CD8-positive, alpha-beta T cell (primary cell): ENCODE measurements at regions of chr14 and their contacts with region 1.

Region 1: DNA sequence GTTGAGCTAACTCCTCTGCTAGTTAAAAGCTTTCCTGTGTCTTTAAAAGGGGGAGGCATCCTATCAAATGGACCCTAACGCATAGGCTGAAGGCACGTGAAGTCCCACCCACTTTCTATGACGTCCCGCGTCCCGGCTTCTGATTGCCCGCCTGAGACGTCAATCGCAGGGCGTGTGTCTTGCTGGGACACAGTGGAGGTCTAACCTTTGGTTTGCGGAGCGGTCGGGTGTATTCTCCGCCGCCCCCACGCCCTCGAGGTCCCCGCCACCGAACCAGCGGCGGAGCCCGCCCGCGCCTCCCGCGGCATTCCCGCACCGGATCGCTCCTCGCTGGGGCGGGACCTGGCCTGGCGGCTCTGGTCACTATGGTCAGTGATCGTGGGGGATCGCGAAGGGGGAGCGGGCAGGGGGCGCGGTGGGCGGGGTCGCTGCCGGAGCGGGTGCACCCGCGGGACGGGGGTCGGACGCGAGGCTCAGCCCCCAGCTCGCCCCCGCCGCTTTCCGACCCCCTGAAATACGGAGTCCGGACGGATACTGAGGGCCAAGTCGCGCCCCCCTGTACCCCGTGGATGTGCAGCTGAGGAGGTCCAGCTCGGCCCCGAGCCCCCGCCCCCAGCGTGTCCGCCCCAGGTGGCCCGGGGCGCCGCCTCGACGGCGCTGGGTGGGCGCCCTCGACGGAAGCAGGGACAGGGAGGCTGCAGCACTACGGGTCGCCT is at the start of gene OTUB2:
- DNase-seq: peak; percentile 91 to 98 (median 95)
- ATAC-seq: peak; percentile 100
- H3K4me3 ChIP-seq: peak within 1 kb of the TSS; percentile 24 to 42
- H3K4me3 Mint-ChIP-seq: peak within 1 kb of the TSS; percentile 84
- H3K27ac ChIP-seq: no peak within 1 kb of the TSS
- H3K27ac Mint-ChIP-seq: no peak within 1 kb of the TSS
- H3K4me1 ChIP-seq: no peaks in the 10 kb centered on the region
- H3K4me1 Mint-ChIP-seq: peaks cover 25% of the 10 kb centered on the region
- H3K27me3 ChIP-seq: no peaks in the 10 kb centered on the region
- H3K27me3 Mint-ChIP-seq: peaks cover 3% of the 10 kb centered on the region
- CTCF ChIP-seq: no peak
- total RNA-seq, gene OTUB2: not detected

Region 2: GRCh38 chr14:93857081-93857480 is 169.2 kb before region 1 on chr14:
- CTCF ChIA-PET with region 1: no interaction called
- POLR2A ChIA-PET with region 1: no interaction called
- intact Hi-C with region 1: no loop called
- DNase-seq: no peak
- ATAC-seq: no peak
- H3K4me3 ChIP-seq: no peak overlapping the region
- H3K4me3 Mint-ChIP-seq: no peak overlapping the region
- H3K27ac ChIP-seq: no peak overlapping the region
- H3K27ac Mint-ChIP-seq: no peak overlapping the region
- H3K4me1 ChIP-seq: no peaks in the 10 kb centered on the region
- H3K4me1 Mint-ChIP-seq: no peaks in the 10 kb centered on the region
- H3K27me3 ChIP-seq: no peaks in the 10 kb centered on the region
- H3K27me3 Mint-ChIP-seq: peaks cover 22% of the 10 kb centered on the region
- CTCF ChIP-seq: no peak

Region 3: GRCh38 chr14:94036313-94037050 is 10.2 kb after region 1 on chr14:
- CTCF ChIA-PET with region 1: interaction called, 109 read pairs
- POLR2A ChIA-PET with region 1: interaction called, 7 read pairs
- intact Hi-C with region 1: no loop called
- DNase-seq: peak; percentile 52 to 84 (median 78)
- ATAC-seq: peak; percentile 99
- H3K4me3 ChIP-seq: no peak overlapping the region
- H3K4me3 Mint-ChIP-seq: no peak overlapping the region
- H3K27ac ChIP-seq: no peak overlapping the region
- H3K27ac Mint-ChIP-seq: no peak overlapping the region
- H3K4me1 ChIP-seq: no peaks in the 10 kb centered on the region
- H3K4me1 Mint-ChIP-seq: peaks cover 3% of the 10 kb centered on the region
- H3K27me3 ChIP-seq: no peaks in the 10 kb centered on the region
- H3K27me3 Mint-ChIP-seq: no peaks in the 10 kb centered on the region
- CTCF ChIP-seq: peak; percentile 82

Region 4: DNA sequence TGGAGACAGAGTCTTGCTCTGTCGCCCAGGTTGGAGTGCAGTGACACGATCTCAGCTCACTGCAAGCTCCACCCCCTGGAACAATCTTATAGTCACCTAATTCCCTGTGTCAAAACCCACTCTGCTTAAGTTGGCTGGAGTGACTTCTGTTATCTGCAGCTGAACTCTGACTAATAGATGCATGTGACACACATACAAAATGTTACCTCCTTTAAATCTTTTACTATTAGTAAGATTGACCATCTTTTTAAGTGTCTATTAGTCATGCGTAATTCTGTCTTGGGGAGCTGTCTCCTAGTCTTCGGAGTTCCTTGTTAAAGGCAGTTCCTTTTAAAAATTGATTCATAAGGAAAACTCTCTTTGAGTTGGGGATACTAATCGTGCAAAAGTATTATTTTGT is 62.2 kb after region 1 on chr14:
- CTCF ChIA-PET with region 1: no interaction called
- POLR2A ChIA-PET with region 1: no interaction called
- intact Hi-C with region 1: no loop called
- DNase-seq: no peak
- ATAC-seq: no peak
- H3K4me3 ChIP-seq: no peak overlapping the region
- H3K4me3 Mint-ChIP-seq: no peak overlapping the region
- H3K27ac ChIP-seq: no peak overlapping the region
- H3K27ac Mint-ChIP-seq: no peak overlapping the region
- H3K4me1 ChIP-seq: no peaks in the 10 kb centered on the region
- H3K4me1 Mint-ChIP-seq: no peaks in the 10 kb centered on the region
- H3K27me3 ChIP-seq: no peaks in the 10 kb centered on the region
- H3K27me3 Mint-ChIP-seq: no peaks in the 10 kb centered on the region
- CTCF ChIP-seq: no peak

Region 5: GRCh38 chr14:94173885-94174603 is 147.7 kb after region 1 on chr14 and contains the start of gene PPP4R4:
- CTCF ChIA-PET with region 1: no interaction called
- POLR2A ChIA-PET with region 1: no interaction called
- intact Hi-C with region 1: loop called in 1 of 2 experiments (anchors 1 kb)
- DNase-seq: peak; percentile 66 to 93 (median 84)
- ATAC-seq: peak; percentile 89
- H3K4me3 ChIP-seq: peak within 1 kb of the TSS; percentile 62 to 77
- H3K4me3 Mint-ChIP-seq: peak within 1 kb of the TSS; percentile 84
- H3K27ac ChIP-seq: no peak within 1 kb of the TSS
- H3K27ac Mint-ChIP-seq: no peak within 1 kb of the TSS
- H3K4me1 ChIP-seq: peaks cover 12% of the 10 kb centered on the region
- H3K4me1 Mint-ChIP-seq: peaks cover 18% of the 10 kb centered on the region
- H3K27me3 ChIP-seq: peaks cover 0 to 8% of the 10 kb centered on the region in 2 experiments
- H3K27me3 Mint-ChIP-seq: peaks cover 16% of the 10 kb centered on the region
- CTCF ChIP-seq: no peak
- total RNA-seq, gene PPP4R4: not detected

Region 6: GRCh38 chr14:94239406-94239805 is 213.1 kb after region 1 on chr14:
- CTCF ChIA-PET with region 1: no interaction called
- POLR2A ChIA-PET with region 1: no interaction called
- intact Hi-C with region 1: no loop called
- DNase-seq: no peak
- ATAC-seq: no peak
- H3K4me3 ChIP-seq: no peak overlapping the region
- H3K4me3 Mint-ChIP-seq: no peak overlapping the region
- H3K27ac ChIP-seq: no peak overlapping the region
- H3K27ac Mint-ChIP-seq: no peak overlapping the region
- H3K4me1 ChIP-seq: no peaks in the 10 kb centered on the region
- H3K4me1 Mint-ChIP-seq: no peaks in the 10 kb centered on the region
- H3K27me3 ChIP-seq: no peaks in the 10 kb centered on the region
- H3K27me3 Mint-ChIP-seq: peaks cover 13% of the 10 kb centered on the region
- CTCF ChIP-seq: no peak